Posterior cingulate gyrus (tissue), 11 donors: ENCODE measurements at regions of chr3 and their contacts with region 1.

Region 1: GRCh38 chr3:13880205-13881156 is 610 bp upstream of the WNT7A start:
- DNase-seq: peak in 9 of 10 donors; percentile 29 to 91 (median 41)

Region 2: DNA sequence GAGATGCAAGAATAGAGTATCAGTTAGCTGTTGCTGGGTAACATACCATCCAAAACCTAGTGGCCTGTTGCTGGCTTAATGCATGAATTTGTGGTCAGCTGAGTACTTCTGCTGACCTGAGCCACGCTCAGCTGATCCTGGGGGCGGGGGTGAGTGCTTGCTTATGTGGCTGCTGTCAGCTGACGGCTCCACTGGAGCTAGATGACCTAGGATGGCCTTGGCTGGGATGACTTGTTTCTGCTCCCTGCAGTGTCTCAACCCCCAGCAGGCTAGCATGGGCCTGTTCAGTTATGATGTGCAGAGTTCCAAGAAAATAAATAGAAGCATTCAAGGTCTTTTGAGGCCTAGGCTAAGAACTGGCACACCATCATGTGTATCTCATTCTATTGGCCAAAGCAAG is 267.7 kb before region 1 on chr3:
- intact Hi-C with region 1: no loop called
- DNase-seq: peak in 3 of 10 donors; percentile 18 to 68 (median 37)

Region 3: DNA sequence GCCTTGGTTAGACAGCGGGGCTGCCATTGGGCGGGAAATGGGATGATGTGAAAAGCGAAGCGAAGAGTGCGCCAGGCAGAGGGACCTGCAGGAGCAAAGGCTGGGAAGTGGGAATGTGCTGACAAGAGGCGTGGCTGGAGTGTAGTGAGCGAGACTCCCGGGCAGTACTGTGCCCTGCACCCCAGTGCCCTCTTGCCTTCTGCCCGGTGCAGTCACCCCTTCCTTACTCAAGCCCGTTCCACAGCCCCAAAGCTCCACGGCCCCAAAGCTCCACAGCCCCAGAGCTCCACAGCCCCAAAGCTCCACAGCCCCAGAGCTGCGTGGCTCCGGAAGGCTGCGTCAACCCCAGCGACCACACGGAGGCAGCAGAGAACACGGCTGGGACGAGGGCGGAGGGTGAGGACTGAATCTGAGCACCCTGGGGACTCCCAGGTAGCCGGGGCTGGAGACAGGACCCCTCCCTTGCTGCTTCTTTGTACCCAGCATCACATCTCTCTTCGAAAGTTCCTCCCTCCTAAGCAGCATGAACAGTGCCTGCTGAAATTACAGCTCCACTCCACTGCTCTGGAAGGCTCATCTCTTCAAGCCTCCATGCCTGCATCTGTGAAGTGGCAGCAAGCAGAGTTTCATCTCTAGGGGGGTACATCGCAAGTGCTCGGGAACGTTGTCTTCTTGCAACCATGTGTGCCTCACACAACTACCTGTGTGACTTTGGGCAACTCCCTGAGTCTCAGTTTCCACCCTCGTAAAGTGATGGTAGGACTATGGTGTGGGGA is 222.6 kb before region 1 on chr3:
- intact Hi-C with region 1: loop called (anchors 1 kb)
- DNase-seq: peak; percentile 59 to 96 (median 74)

Region 4: GRCh38 chr3:13932578-13933295 is 52.3 kb after region 1 on chr3:
- intact Hi-C with region 1: no loop called
- DNase-seq: peak in 2 of 10 donors; percentile 4 to 74

Region 5: GRCh38 chr3:14016885-14017475 is 136.5 kb after region 1 on chr3:
- intact Hi-C with region 1: no loop called
- DNase-seq: no peak